Tibial artery (tissue), 4 donors: ENCODE measurements at regions of chr9 and their contacts with region 1.

Region 1: GRCh38 chr9:29669613-29670012 is 2096.3 kb upstream of the C9orf72 start:
- DNase-seq: no peak
- H3K4me3 ChIP-seq: no peak overlapping the region
- H3K27ac ChIP-seq: no peak overlapping the region
- H3K4me1 ChIP-seq: no peaks in the 10 kb centered on the region
- H3K27me3 ChIP-seq: no peaks in the 10 kb centered on the region
- CTCF ChIP-seq: no peak

Region 2: DNA sequence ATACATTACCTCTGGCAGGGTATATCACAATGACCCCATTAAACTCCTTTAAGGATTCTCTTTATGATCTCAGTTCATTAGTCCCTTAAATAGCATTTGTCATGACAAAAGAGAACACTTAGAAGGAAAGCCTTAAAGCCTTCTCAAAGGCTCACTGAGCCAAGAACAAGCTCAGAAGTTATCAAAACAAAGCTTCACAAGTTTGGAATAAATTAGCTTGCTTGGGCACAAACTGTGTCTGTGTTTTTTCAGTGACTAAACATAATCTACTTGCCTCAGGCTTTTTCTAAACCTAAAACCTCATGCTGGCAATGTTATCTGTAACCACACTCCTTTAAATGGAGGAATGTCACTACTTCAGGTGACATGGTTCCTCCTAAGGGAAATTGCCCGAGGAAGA is 981.4 kb before region 1 on chr9:
- intact Hi-C with region 1: no loop called
- DNase-seq: no peak
- H3K4me3 ChIP-seq: no peak overlapping the region
- H3K27ac ChIP-seq: no peak overlapping the region
- H3K4me1 ChIP-seq: no peaks in the 10 kb centered on the region
- H3K27me3 ChIP-seq: no peaks in the 10 kb centered on the region
- CTCF ChIP-seq: no peak

Region 3: GRCh38 chr9:29416204-29416603 is 253.4 kb before region 1 on chr9:
- intact Hi-C with region 1: loop called (anchors 5 kb)
- DNase-seq: no peak
- H3K4me3 ChIP-seq: no peak overlapping the region
- H3K27ac ChIP-seq: no peak overlapping the region
- H3K4me1 ChIP-seq: no peaks in the 10 kb centered on the region
- H3K27me3 ChIP-seq: no peaks in the 10 kb centered on the region
- CTCF ChIP-seq: no peak